CD4-positive, alpha-beta T cell (primary cell): ENCODE measurements at regions of chr5 and their contacts with region 1.

Region 1: DNA sequence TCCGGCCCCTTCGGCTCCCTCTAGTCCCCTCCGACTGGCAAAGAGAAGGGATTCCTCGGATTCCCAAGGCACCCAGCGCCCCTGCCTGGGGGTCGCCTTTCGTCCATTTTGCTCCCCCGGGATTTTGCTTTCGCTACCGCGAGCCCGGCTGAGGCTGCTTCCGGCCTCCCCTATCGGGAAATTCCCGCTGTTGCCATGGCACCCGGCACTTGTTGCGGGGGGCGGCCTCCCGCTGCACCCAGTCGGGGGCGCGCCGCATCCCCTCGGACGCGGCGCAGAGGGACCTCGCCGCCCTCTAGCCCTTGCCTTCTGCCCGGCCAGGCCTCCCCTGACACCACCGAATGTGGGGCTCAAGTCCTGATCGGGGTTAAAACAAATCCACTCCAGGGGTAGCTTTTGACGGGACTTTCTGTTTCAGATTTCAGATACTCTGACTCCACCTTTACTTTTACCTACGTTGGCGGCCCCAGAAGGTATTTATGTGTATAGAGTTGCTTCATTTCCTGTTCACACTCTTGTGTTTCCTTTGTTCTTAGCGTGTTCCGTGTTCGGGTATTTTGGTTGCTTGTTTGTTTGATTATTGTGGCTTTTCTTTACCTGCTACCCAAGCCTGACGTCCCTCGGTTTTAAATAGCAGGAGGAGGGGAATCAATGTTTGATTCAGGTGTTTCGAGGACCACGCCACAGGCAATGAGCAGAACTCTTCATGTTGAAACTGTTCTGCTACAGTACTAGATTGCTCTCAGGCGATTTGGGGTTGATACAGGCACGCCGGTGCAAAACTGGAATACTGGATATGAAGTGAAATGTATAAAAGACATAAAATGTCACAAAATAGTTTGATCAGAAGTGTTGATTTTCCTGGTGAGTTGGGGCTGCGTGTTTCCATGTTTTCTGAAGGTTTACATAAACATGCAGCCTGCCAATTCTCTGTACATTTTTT is 1.5 kb downstream of the PARP8 start:
- DNase-seq: peak; percentile 73 to 94 (median 82)
- ATAC-seq: peak; percentile 55
- H3K4me3 ChIP-seq: peak overlapping the region; percentile 93
- H3K4me3 Mint-ChIP-seq: peak overlapping the region; percentile 93
- H3K27ac ChIP-seq: peak overlapping the region; percentile 96 to 100
- H3K27ac Mint-ChIP-seq: peak overlapping the region; percentile 95
- H3K4me1 ChIP-seq: peaks cover 38% of the 10 kb centered on the region
- H3K4me1 Mint-ChIP-seq: peaks cover 73% of the 10 kb centered on the region
- H3K27me3 ChIP-seq: no peaks in the 10 kb centered on the region
- H3K27me3 Mint-ChIP-seq: no peaks in the 10 kb centered on the region
- CTCF ChIP-seq: no peak

Region 2: DNA sequence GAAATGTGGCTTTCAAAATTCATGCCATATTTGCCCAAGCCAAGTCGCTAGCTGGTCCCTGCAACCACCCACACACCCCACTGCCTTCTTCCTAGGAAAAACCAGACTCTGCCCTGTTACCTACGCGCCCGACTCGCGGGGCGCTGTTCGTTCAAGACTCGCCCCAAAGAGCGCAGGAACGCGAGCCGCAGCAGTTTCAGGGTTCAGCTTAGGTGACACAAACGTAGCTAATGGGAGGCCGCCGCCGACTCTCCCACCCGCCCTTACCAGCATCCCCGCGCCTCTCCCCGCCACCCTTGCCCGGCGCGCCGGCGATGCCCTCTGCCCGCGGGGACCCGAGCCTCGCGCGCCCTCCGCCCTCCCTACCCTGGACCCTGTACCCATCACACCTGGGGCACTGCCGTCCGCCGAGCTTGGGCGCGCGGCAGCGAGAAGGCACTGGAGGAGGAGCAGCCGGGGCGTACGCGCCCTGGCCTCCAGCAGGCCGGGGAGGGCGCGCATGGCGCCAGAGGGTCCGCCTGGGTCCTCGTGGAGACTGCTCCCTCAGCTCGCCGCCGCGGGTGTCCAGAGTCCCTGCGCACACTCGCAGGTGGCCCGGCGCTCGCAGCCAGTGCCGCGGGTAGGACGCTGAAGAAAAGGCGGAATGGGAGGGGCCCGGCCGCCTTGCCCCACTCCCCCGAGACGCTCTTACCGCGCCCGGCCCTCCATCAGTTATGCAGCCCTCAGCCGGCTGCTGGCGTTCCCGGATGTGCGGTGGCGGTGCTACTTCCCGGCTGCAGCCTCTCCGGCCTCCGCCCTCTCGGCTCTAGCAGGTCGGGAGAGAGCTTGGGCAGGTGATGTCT is 227.1 kb before region 1 on chr5 and contains the start of gene EMB:
- CTCF ChIA-PET with region 1: interaction called, 9 read pairs
- POLR2A ChIA-PET with region 1: interaction called, 51 read pairs
- intact Hi-C with region 1: loop called (anchors 1 to 5 kb)
- DNase-seq: peak; percentile 69 to 92 (median 78)
- ATAC-seq: peak; percentile 69
- H3K4me3 ChIP-seq: peak within 1 kb of the TSS; percentile 67
- H3K4me3 Mint-ChIP-seq: peak within 1 kb of the TSS; percentile 95
- H3K27ac ChIP-seq: peak within 1 kb of the TSS; percentile 89 to 95
- H3K27ac Mint-ChIP-seq: peak within 1 kb of the TSS; percentile 99
- H3K4me1 ChIP-seq: peaks cover 41% of the 10 kb centered on the region
- H3K4me1 Mint-ChIP-seq: peaks cover 90% of the 10 kb centered on the region
- H3K27me3 ChIP-seq: no peaks in the 10 kb centered on the region
- H3K27me3 Mint-ChIP-seq: no peaks in the 10 kb centered on the region
- CTCF ChIP-seq: peak; percentile 64
- total RNA-seq, gene EMB: 131 to 133 TPM

Region 3: GRCh38 chr5:50694027-50694590 is 26.2 kb after region 1 on chr5:
- CTCF ChIA-PET with region 1: no interaction called
- POLR2A ChIA-PET with region 1: interaction called, 6 read pairs
- intact Hi-C with region 1: loop called in 1 of 2 experiments (anchors 2 kb)
- DNase-seq: peak in 2 of 14 experiments; percentile 49
- ATAC-seq: no peak
- H3K4me3 ChIP-seq: no peak overlapping the region
- H3K4me3 Mint-ChIP-seq: no peak overlapping the region
- H3K27ac ChIP-seq: no peak overlapping the region
- H3K27ac Mint-ChIP-seq: peak overlapping the region; percentile 43
- H3K4me1 ChIP-seq: peaks cover 25% of the 10 kb centered on the region
- H3K4me1 Mint-ChIP-seq: peaks cover 43% of the 10 kb centered on the region
- H3K27me3 ChIP-seq: no peaks in the 10 kb centered on the region
- H3K27me3 Mint-ChIP-seq: no peaks in the 10 kb centered on the region
- CTCF ChIP-seq: no peak

Region 4: GRCh38 chr5:50744776-50745175 is 76.9 kb after region 1 on chr5:
- CTCF ChIA-PET with region 1: interaction called, 5 read pairs
- POLR2A ChIA-PET with region 1: interaction called, 17 read pairs
- intact Hi-C with region 1: loop called in 1 of 2 experiments (anchors 5 kb)
- DNase-seq: peak in 3 of 14 experiments; percentile 38 to 64 (median 46)
- ATAC-seq: peak; percentile 46
- H3K4me3 ChIP-seq: peak overlapping the region; percentile 46
- H3K4me3 Mint-ChIP-seq: peak overlapping the region; percentile 83
- H3K27ac ChIP-seq: peak overlapping the region; percentile 68 to 71
- H3K27ac Mint-ChIP-seq: peak overlapping the region; percentile 90
- H3K4me1 ChIP-seq: peaks cover 27% of the 10 kb centered on the region
- H3K4me1 Mint-ChIP-seq: peaks cover 77% of the 10 kb centered on the region
- H3K27me3 ChIP-seq: no peaks in the 10 kb centered on the region
- H3K27me3 Mint-ChIP-seq: no peaks in the 10 kb centered on the region
- CTCF ChIP-seq: no peak